Caco-2 (cell line): ENCODE measurements at regions of chr11 and their contacts with region 1.

Region 1: DNA sequence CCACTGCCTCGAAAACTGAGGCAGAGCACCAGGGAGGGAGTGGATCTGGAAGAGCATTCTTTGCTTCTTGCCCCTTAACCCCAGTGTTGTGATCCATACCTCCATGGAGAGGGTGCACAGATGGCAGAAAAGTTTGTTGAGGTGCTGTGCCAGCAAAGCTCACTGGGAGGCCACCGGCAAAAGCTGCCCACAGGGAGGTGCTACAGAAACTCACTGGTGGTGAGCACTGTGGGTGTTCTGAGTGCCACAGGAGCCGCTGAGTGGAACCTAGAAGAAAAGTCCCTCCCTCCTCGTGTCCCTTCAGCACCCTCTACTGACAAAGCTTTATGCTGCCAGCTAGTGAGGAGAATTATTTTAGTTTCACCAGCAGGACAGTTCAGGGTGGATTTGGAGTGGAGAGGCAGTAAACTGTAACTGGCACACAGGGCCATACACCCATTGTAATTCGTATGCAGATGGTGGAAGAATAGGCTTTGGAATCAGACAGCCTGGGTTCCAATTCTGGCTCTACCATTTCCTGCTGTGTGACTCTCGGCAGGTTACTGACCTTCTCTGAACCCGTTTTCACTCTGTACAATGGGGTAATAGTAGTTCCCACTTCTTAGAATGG is 84.6 kb downstream of the SWAP70 start:
- DNase-seq: peak; percentile 70 to 75
- H3K4me3 ChIP-seq: no peak overlapping the region
- H3K4me3 Mint-ChIP-seq: no peak overlapping the region
- H3K27ac Mint-ChIP-seq: no peak overlapping the region
- H3K4me1 ChIP-seq: no peaks in the 10 kb centered on the region
- H3K4me1 Mint-ChIP-seq: peaks cover 6% of the 10 kb centered on the region
- H3K27me3 ChIP-seq: no peaks in the 10 kb centered on the region
- H3K27me3 Mint-ChIP-seq: no peaks in the 10 kb centered on the region
- CTCF ChIP-seq: peak; percentile 49 to 74

Region 2: DNA sequence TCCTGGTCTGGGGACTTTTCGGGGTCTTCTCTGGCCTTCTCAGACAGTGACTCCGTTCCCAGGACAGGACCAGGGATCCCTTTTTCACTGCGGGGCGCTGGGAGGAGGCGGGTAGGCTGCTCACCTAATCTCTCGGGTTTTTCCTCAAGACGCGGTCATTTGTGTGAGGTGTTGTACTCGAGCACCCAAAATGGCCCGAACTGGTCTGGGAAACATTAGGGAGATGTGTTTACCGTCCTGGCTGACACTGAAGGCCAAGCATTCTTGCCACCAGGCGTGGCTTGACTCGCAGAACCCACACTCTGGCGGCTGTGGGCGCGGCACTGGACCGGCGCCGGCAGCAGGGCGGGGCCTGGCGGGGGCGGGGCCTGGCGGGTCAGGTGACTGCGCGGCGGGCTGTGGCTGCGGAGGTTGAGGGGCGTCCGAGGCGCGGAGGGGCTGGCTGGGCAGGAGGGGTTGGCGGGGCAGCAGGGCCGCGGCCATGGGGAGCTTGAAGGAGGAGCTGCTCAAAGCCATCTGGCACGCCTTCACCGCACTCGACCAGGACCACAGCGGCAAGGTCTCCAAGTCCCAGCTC is 84.7 kb before region 1 on chr11 and contains the start of gene SWAP70:
- CTCF ChIA-PET with region 1: interaction called, 3 read pairs
- POLR2A ChIA-PET with region 1: no interaction called
- intact Hi-C with region 1: loop called (anchors 1 kb)
- DNase-seq: peak; percentile 95 to 97
- H3K4me3 ChIP-seq: peak within 1 kb of the TSS; percentile 85
- H3K4me3 Mint-ChIP-seq: peak within 1 kb of the TSS; percentile 95
- H3K27ac Mint-ChIP-seq: peak within 1 kb of the TSS; percentile 99
- H3K4me1 ChIP-seq: no peaks in the 10 kb centered on the region
- H3K4me1 Mint-ChIP-seq: no peaks in the 10 kb centered on the region
- H3K27me3 ChIP-seq: no peaks in the 10 kb centered on the region
- H3K27me3 Mint-ChIP-seq: no peaks in the 10 kb centered on the region
- CTCF ChIP-seq: peak; percentile 26 to 61
- total RNA-seq, gene SWAP70: 37.0 and 42.4 TPM in 2 replicates